Naive thymus-derived CD4-positive, alpha-beta T cell (primary cell): ENCODE measurements at regions of chr9 and their contacts with region 1.

Region 1: DNA sequence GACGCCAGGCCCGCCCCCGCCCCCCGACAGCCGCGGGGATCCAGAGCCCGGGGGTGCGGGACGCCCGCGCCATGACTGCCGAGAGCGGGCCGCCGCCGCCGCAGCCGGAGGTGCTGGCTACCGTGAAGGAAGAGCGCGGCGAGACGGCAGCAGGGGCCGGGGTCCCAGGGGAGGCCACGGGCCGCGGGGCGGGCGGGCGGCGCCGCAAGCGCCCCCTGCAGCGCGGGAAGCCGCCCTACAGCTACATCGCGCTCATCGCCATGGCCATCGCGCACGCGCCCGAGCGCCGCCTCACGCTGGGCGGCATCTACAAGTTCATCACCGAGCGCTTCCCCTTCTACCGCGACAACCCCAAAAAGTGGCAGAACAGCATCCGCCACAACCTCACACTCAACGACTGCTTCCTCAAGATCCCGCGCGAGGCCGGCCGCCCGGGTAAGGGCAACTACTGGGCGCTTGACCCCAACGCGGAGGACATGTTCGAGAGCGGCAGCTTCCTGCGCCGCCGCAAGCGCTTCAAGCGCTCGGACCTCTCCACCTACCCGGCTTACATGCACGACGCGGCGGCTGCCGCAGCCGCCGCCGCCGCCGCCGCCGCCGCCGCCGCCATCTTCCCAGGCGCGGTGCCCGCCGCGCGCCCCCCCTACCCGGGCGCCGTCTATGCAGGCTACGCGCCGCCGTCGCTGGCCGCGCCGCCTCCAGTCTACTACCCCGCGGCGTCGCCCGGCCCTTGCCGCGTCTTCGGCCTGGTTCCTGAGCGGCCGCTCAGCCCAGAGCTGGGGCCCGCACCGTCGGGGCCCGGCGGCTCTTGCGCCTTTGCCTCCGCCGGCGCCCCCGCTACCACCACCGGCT is 1.0 kb downstream of the FOXE1 start:
- DNase-seq: peak; percentile 47 to 72 (median 59)
- ATAC-seq: peak; percentile 87
- H3K4me3 ChIP-seq: peak overlapping the region; percentile 51
- H3K4me3 Mint-ChIP-seq: peak overlapping the region; percentile 85 to 93 (median 90)
- H3K27ac ChIP-seq: no peak overlapping the region
- H3K27ac Mint-ChIP-seq: peak overlapping the region in 6 of 9 donors; percentile 1 to 91 (median 73)
- H3K4me1 ChIP-seq: peaks cover 5 to 18% of the 10 kb centered on the region in 2 donors
- H3K4me1 Mint-ChIP-seq: peaks cover 9 to 39% (median 21%) of the 10 kb centered on the region in 7 donors
- H3K27me3 ChIP-seq: peaks cover 12 to 54% of the 10 kb centered on the region in 2 donors
- H3K27me3 Mint-ChIP-seq: peaks cover 62 to 86% (median 71%) of the 10 kb centered on the region in 5 donors

Region 2: GRCh38 chr9:97803167-97804058 is 50.7 kb before region 1 on chr9:
- CTCF ChIA-PET with region 1: no interaction called
- POLR2A ChIA-PET with region 1: no interaction called
- intact Hi-C with region 1: loop called in 1 of 2 experiments (anchors 5 kb)
- DNase-seq: peak; percentile 59 to 77 (median 75)
- ATAC-seq: peak; percentile 98
- H3K4me3 ChIP-seq: peak overlapping the region; percentile 72
- H3K4me3 Mint-ChIP-seq: peak overlapping the region; percentile 78 to 92 (median 87)
- H3K27ac ChIP-seq: peak overlapping the region; percentile 45
- H3K27ac Mint-ChIP-seq: peak overlapping the region in 7 of 9 donors; percentile 28 to 86 (median 80)
- H3K4me1 ChIP-seq: no peaks in the 10 kb centered on the region
- H3K4me1 Mint-ChIP-seq: peaks cover 0 to 13% (median 9%) of the 10 kb centered on the region in 7 donors
- H3K27me3 ChIP-seq: no peaks in the 10 kb centered on the region
- H3K27me3 Mint-ChIP-seq: peaks cover 4 to 51% (median 17%) of the 10 kb centered on the region in 5 donors

Region 3: DNA sequence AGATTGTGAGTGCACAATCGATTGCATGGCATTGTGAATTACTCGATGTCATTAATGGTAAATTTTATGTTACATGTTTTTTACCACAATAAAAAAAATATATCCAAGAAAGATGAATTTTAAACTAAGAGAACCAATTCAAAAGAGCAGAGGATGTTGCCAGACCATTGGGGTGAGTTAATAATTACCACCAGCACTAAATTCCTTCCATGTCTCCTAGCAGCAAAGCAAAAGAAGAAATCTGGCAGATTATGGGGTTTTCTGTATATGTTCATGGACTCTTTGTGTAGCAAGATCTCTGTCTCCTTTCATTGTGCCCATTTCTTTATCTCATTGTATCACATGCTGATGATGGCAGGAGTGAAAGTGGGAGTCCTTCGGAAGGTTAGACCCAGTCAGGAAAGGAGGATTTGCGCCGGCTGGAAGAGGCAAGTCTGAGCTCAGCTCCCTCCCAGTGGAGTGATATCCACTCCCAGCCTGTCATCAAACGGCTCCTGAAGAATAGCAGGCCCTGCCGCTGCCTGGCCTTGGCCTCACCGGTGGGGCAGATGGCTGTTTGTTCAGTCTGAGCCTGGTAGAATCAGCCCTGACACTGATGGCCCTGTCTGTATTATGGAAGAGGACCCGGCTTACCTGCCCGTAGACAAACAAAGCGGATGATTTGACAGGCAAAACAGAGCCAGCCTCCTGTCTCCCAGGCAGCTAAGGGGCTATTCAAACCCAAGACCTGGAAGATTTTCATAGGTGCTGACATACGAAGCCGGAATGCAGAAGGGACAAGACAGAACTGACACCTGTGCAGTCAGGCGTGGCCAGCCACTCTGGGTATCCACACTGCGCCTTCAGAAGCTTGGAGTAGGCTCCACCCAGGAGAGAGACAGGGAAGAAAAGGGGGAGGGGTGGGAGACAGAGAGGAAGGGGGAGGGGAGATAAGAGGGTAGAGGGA is 22.9 kb before region 1 on chr9:
- CTCF ChIA-PET with region 1: no interaction called
- POLR2A ChIA-PET with region 1: no interaction called
- intact Hi-C with region 1: no loop called
- DNase-seq: no peak
- ATAC-seq: no peak
- H3K4me3 ChIP-seq: no peak overlapping the region
- H3K4me3 Mint-ChIP-seq: no peak overlapping the region
- H3K27ac ChIP-seq: no peak overlapping the region
- H3K27ac Mint-ChIP-seq: no peak overlapping the region
- H3K4me1 ChIP-seq: no peaks in the 10 kb centered on the region
- H3K4me1 Mint-ChIP-seq: peaks cover 0 to 2% (median 0%) of the 10 kb centered on the region in 7 donors
- H3K27me3 ChIP-seq: no peaks in the 10 kb centered on the region
- H3K27me3 Mint-ChIP-seq: peaks cover 0 to 40% (median 11%) of the 10 kb centered on the region in 5 donors

Region 4: GRCh38 chr9:97890038-97890437 is 36.0 kb after region 1 on chr9:
- CTCF ChIA-PET with region 1: no interaction called
- POLR2A ChIA-PET with region 1: no interaction called
- intact Hi-C with region 1: no loop called
- DNase-seq: peak; percentile 40 to 73 (median 57)
- ATAC-seq: peak; percentile 88
- H3K4me3 ChIP-seq: no peak overlapping the region
- H3K4me3 Mint-ChIP-seq: peak overlapping the region in 1 of 10 donors; percentile 51
- H3K27ac ChIP-seq: no peak overlapping the region
- H3K27ac Mint-ChIP-seq: peak overlapping the region in 5 of 9 donors; percentile 28 to 81 (median 68)
- H3K4me1 ChIP-seq: peaks cover 0 to 4% of the 10 kb centered on the region in 2 donors
- H3K4me1 Mint-ChIP-seq: peaks cover 6 to 23% (median 18%) of the 10 kb centered on the region in 7 donors
- H3K27me3 ChIP-seq: no peaks in the 10 kb centered on the region
- H3K27me3 Mint-ChIP-seq: no peaks in the 10 kb centered on the region

Region 5: DNA sequence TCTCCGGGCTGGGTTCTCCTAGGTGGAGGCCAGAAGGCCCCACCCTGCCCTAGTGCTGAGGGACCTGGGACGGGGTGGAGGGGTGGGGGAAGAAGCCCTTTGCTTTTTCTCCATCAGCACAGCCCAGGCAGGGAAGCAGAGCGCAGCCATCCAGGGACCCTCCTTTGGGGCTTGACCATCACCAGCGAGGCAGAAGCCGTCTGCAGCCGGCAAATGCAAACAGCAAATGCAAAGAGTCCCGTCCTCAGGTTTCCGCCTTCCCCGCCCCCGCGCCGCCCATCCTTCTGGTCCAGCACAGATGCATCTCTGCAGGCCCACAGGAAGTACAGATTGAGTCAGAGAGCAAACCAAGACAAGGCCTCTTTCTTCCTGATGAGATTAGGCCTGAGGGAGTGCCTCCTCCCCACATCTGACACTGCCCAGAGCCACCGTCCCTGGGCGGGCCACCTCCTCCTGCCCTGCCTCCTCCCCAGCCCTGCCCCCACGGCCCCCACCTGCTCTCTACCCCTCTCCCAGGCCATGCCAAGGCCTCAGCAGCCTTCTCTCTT is 314.9 kb after region 1 on chr9:
- CTCF ChIA-PET with region 1: no interaction called
- POLR2A ChIA-PET with region 1: no interaction called
- intact Hi-C with region 1: no loop called
- DNase-seq: no peak
- ATAC-seq: peak; percentile 78
- H3K4me3 ChIP-seq: no peak overlapping the region
- H3K4me3 Mint-ChIP-seq: peak overlapping the region in 2 of 10 donors; percentile 25 to 35
- H3K27ac ChIP-seq: no peak overlapping the region
- H3K27ac Mint-ChIP-seq: peak overlapping the region in 6 of 9 donors; percentile 47 to 78 (median 64)
- H3K4me1 ChIP-seq: peaks cover 0 to 24% of the 10 kb centered on the region in 2 donors
- H3K4me1 Mint-ChIP-seq: peaks cover 12 to 57% (median 45%) of the 10 kb centered on the region in 7 donors
- H3K27me3 ChIP-seq: no peaks in the 10 kb centered on the region
- H3K27me3 Mint-ChIP-seq: peaks cover 0 to 2% (median 0%) of the 10 kb centered on the region in 5 donors